ENCODE measurements at regions of chr2 and their contacts with region 1.

Region 1: DNA sequence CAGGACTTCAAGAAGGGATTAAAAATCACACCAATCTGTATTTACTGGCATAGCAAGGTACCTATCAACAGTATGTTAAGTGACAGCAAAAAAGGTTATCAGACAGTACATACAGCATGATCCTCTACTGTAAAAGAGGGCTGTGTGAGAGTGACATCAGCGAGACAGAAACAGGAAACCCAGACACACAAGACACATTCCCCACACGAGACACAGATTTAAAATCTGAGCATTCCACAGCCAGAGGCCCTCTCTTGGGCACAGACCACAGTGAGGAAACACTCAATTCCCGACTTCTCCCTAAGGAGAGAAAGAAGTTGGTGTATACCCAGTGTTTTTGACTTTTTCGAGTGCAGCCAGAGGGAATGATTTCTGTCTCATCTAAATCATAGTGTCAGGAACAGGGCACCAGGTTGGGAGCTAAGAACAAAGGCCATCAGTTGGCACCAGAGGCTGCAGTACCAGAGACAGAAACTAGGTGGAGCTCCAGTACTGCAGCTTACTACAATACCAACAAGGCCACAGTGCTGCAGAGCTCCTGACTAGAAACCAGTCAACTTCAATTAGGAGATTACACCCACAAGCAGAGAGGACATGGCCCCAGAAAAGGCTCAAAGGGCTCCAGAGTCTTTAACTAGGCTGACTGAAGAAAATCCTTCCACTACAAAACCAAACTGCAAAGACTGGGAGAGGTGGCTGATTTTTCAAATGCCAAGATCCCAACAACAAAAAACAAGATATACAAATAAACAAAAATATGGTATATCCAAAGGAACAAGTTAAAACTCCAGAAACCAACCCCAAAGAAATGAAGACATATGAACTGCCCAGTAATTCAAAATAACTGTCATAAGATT is 41.0 kb downstream of the UNC50 start:
- DNase-seq: peak; percentile 70
- H3K4me3 ChIP-seq: no peak overlapping the region; a peak in 1 of 4 replicates
- H3K27ac ChIP-seq: peak overlapping the region in 1 of 2 experiments; percentile 11; a peak in 1 of 4 replicates
- H3K4me1 ChIP-seq: no peaks in the 10 kb centered on the region
- H3K27me3 ChIP-seq: no peaks in the 10 kb centered on the region
- CTCF ChIP-seq: peak; percentile 98
- EP300 ChIP-seq: no peak
- RAD21 ChIP-seq: peak; percentile 99

Region 2: GRCh38 chr2:98426771-98427170 is 222.6 kb before region 1 on chr2:
- CTCF ChIA-PET with region 1: no interaction called
- POLR2A ChIA-PET with region 1: no interaction called
- DNase-seq: no peak
- H3K4me3 ChIP-seq: no peak overlapping the region
- H3K27ac ChIP-seq: no peak overlapping the region
- H3K4me1 ChIP-seq: no peaks in the 10 kb centered on the region
- H3K27me3 ChIP-seq: no peaks in the 10 kb centered on the region
- CTCF ChIP-seq: no peak
- EP300 ChIP-seq: no peak
- RAD21 ChIP-seq: no peak

Region 3: GRCh38 chr2:98664327-98664726 is 15.0 kb after region 1 on chr2:
- CTCF ChIA-PET with region 1: interaction called, 15 read pairs
- POLR2A ChIA-PET with region 1: no interaction called
- DNase-seq: no peak
- H3K4me3 ChIP-seq: no peak overlapping the region
- H3K27ac ChIP-seq: no peak overlapping the region
- H3K4me1 ChIP-seq: no peaks in the 10 kb centered on the region
- H3K27me3 ChIP-seq: no peaks in the 10 kb centered on the region
- CTCF ChIP-seq: no peak
- EP300 ChIP-seq: no peak
- RAD21 ChIP-seq: no peak

Region 4: GRCh38 chr2:98685930-98686887 is 36.8 kb after region 1 on chr2:
- CTCF ChIA-PET with region 1: no interaction called
- POLR2A ChIA-PET with region 1: no interaction called
- DNase-seq: no peak
- H3K4me3 ChIP-seq: no peak overlapping the region
- H3K27ac ChIP-seq: no peak overlapping the region
- H3K4me1 ChIP-seq: no peaks in the 10 kb centered on the region
- H3K27me3 ChIP-seq: no peaks in the 10 kb centered on the region; the same call in 1 of the 2 replicates
- CTCF ChIP-seq: no peak
- EP300 ChIP-seq: no peak
- RAD21 ChIP-seq: no peak

Region 5: DNA sequence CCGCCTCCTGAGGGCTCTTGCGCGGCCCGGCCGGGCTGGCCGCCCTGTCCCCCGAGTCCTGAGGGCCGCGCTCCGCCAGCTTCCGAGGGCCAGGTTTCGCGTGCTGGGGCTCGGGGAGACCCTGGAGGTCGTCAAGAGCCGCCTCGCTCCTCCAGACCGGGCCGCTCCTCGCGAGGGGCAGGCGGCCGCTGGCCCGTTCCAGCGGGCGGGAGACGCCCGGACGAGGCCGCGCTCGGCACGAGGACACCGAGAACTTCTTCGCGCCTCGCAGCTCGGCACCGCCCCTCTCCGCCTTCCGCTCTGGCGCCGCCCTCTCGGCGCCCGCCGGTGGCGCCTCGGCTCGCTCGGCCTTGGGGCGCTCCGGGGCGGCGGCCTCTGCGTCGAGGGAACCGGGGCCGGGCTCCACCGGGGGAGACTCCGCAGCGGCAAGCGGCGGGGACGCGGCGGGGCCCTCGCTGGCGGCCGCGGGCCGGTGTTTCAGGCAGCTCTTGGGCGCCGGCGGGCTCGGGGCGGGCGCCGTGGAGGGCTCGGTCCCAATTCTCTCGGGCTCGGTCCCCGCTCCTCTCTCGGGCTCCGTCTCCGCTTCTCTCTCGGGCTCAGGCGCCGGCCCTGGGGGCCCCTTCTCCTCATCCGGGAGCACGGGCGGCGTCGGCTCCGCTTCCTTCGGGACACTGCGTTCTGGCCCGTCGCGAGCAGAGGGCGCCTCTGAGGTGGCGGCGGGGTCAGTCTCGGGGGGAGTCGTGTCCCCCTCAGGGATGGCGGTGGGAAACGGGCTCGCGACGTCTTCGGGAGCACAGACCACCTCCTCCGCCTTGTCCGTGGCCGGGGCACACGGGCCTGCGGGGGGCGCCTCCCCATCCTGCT is 173.2 kb after region 1 on chr2:
- CTCF ChIA-PET with region 1: interaction called, 13 read pairs
- POLR2A ChIA-PET with region 1: no interaction called
- DNase-seq: peak; percentile 91
- H3K4me3 ChIP-seq: peak overlapping the region in 1 of 2 experiments; percentile 42; a peak in 2 of 4 replicates
- H3K27ac ChIP-seq: no peak overlapping the region
- H3K4me1 ChIP-seq: peaks cover 0 to 10% of the 10 kb centered on the region in 2 experiments; a peak in 1 of 4 replicates
- H3K27me3 ChIP-seq: peaks cover 10% of the 10 kb centered on the region; the same call in 1 of the 2 replicates
- CTCF ChIP-seq: no peak
- EP300 ChIP-seq: no peak
- RAD21 ChIP-seq: 0 out of 2 replicates have a peak, but pooled peaks have one; percentile 5

Region 6: GRCh38 chr2:98835831-98836385 is 186.5 kb after region 1 on chr2:
- CTCF ChIA-PET with region 1: interaction called, 64 read pairs
- POLR2A ChIA-PET with region 1: no interaction called
- DNase-seq: no peak
- H3K4me3 ChIP-seq: no peak overlapping the region
- H3K27ac ChIP-seq: no peak overlapping the region
- H3K4me1 ChIP-seq: no peaks in the 10 kb centered on the region; a peak in 1 of 4 replicates
- H3K27me3 ChIP-seq: no peaks in the 10 kb centered on the region; the same call in 1 of the 2 replicates
- CTCF ChIP-seq: no peak
- EP300 ChIP-seq: no peak
- RAD21 ChIP-seq: no peak

Region 7: DNA sequence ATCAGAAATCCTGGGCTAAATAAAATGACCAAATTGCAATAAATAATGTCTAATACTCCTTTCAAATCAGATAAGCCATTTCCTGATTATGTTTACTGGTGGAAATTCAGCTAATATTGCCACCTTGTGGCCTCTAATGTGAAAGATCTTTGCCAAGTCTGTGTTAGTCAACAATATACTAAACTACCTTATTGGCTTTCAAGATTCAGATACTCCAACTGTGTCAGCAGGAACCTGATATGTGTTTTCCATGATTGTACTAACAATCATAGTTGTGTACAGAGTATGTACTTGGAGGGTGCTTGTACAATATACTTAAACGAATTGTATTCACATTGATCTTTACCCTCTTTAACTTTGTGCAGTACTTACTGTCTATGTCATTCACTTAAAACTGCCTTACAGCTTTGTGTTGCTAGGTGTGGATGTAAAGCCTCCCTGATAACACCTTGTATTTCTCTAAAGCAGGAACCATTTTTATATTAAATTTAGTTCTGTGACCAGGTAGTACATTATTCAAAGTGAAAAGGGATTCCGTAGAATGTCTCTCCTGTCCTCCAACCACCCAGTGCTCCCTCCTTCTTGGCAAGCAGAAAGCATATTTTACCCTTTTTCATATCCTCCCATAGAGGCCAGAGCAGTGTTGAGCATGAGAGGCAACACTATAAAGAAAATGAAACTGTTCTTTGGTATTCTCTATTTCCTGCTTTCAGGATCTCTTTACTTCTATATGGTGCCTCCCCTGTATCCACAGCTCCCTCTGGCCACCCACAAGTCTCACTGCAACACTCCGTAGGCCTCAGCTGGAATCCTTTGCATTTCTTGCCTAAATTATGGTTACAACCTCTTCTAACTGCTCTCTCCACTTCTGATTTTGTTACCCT is 417.0 kb after region 1 on chr2:
- CTCF ChIA-PET with region 1: interaction called, 42 read pairs
- POLR2A ChIA-PET with region 1: no interaction called
- DNase-seq: peak; percentile 34
- H3K4me3 ChIP-seq: no peak overlapping the region
- H3K27ac ChIP-seq: no peak overlapping the region; a peak in 1 of 4 replicates
- H3K4me1 ChIP-seq: peaks cover 0 to 7% of the 10 kb centered on the region in 2 experiments; a peak in 2 of 4 replicates
- H3K27me3 ChIP-seq: no peaks in the 10 kb centered on the region; the same call in none of the 2 replicates
- CTCF ChIP-seq: peak; percentile 68
- EP300 ChIP-seq: no peak
- RAD21 ChIP-seq: peak; percentile 72